Activated T-helper 2 cell treated with anti-CD3 and anti-CD28 coated beads, Interferon-gamma antibody, Interleukin-2, Interleukin-4, amounts not matched to agents 10 μg/mL and 5 μg/mL and 100 μg/mL, durations not matched to agents 14 hours and 24 hours and 36 hours (primary cell): ENCODE measurements at regions of chr11 and their contacts with region 1.

Region 1: GRCh38 chr11:124758317-124759203 is 3.5 kb downstream of the ESAM start:
- DNase-seq: peak; percentile 64
- H3K4me3 Mint-ChIP-seq: peak overlapping the region; percentile 62
- H3K27ac Mint-ChIP-seq: no peak overlapping the region
- H3K4me1 Mint-ChIP-seq: peaks cover 16% of the 10 kb centered on the region
- H3K27me3 Mint-ChIP-seq: peaks cover 59% of the 10 kb centered on the region

Region 2: GRCh38 chr11:124644426-124645280 is 113.9 kb before region 1 on chr11:
- intact Hi-C with region 1: loop called (anchors 1 kb)
- DNase-seq: no peak
- H3K4me3 Mint-ChIP-seq: no peak overlapping the region
- H3K27ac Mint-ChIP-seq: no peak overlapping the region
- H3K4me1 Mint-ChIP-seq: peaks cover 12% of the 10 kb centered on the region
- H3K27me3 Mint-ChIP-seq: no peaks in the 10 kb centered on the region

Region 3: GRCh38 chr11:124746621-124747243 is 11.8 kb before region 1 on chr11:
- intact Hi-C with region 1: loop called (anchors 1 kb)
- DNase-seq: peak; percentile 69
- H3K4me3 Mint-ChIP-seq: peak overlapping the region; percentile 95
- H3K27ac Mint-ChIP-seq: peak overlapping the region; percentile 94
- H3K4me1 Mint-ChIP-seq: peaks cover 14% of the 10 kb centered on the region
- H3K27me3 Mint-ChIP-seq: peaks cover 8% of the 10 kb centered on the region

Region 4: GRCh38 chr11:124793466-124794278 is 35.1 kb after region 1 on chr11:
- intact Hi-C with region 1: loop called (anchors 2 kb)
- DNase-seq: no peak
- H3K4me3 Mint-ChIP-seq: no peak overlapping the region
- H3K27ac Mint-ChIP-seq: no peak overlapping the region
- H3K4me1 Mint-ChIP-seq: peaks cover 40% of the 10 kb centered on the region
- H3K27me3 Mint-ChIP-seq: no peaks in the 10 kb centered on the region

Region 5: GRCh38 chr11:124800226-124800929 is 41.8 kb after region 1 on chr11 and contains the start of gene MSANTD2:
- intact Hi-C with region 1: loop called (anchors 2 kb)
- DNase-seq: peak; percentile 76
- H3K4me3 Mint-ChIP-seq: peak within 1 kb of the TSS; percentile 92
- H3K27ac Mint-ChIP-seq: peak within 1 kb of the TSS; percentile 80
- H3K4me1 Mint-ChIP-seq: peaks cover 27% of the 10 kb centered on the region
- H3K27me3 Mint-ChIP-seq: peaks cover 11% of the 10 kb centered on the region
- total RNA-seq, gene MSANTD2: 10.5 and 10.8 TPM in 2 replicates

Region 6: DNA sequence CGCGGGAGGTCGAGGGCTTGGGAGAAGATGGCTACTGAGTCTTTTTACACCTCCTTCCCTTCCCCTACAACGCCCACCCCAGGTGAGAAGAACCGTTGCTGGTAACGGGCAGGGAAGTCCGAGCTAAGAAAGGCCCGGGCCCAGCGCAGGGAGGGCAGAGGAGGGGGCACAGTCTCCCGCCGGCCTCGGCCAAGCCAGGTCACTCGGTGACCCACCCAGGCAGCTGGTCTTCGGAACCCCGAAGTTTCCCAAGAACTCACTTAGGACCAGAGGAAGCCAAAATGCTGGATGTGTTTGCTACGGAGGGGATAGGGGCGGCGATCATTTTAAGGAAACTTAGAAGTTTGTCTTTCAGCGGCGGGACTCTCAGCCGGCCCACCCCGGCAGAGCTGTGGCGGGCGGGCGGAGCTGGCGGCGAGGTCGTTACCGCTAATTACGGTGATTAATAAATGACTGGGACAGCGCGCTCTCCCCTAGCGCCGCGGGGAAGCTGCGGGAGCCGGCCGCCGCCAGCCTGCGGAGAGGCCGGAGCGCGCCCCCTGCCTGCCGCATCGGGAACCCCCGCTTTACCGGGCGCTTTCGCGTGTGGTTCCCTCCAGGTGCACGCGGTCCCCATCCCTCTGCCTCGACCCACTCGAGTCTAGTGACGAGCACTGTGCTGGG is 107.5 kb after region 1 on chr11:
- intact Hi-C with region 1: loop called (anchors 2 kb)
- DNase-seq: peak; percentile 41
- H3K4me3 Mint-ChIP-seq: no peak overlapping the region
- H3K27ac Mint-ChIP-seq: no peak overlapping the region
- H3K4me1 Mint-ChIP-seq: peaks cover 9% of the 10 kb centered on the region
- H3K27me3 Mint-ChIP-seq: peaks cover 93% of the 10 kb centered on the region